Astrocyte of the cerebellum (primary cell): ENCODE measurements at regions of chr3 and their contacts with region 1.

Region 1: GRCh38 chr3:41199866-41200668 is 762 bp downstream of the CTNNB1 start:
- DNase-seq: no peak
- H3K4me3 ChIP-seq: peak overlapping the region; percentile 53
- CTCF ChIP-seq: no peak

Region 2: GRCh38 chr3:40847551-40847992 is 352.5 kb before region 1 on chr3:
- in situ Hi-C with region 1: loop called (anchors 5 kb)
- DNase-seq: peak; percentile 95
- H3K4me3 ChIP-seq: no peak overlapping the region
- CTCF ChIP-seq: peak; percentile 75

Region 3: DNA sequence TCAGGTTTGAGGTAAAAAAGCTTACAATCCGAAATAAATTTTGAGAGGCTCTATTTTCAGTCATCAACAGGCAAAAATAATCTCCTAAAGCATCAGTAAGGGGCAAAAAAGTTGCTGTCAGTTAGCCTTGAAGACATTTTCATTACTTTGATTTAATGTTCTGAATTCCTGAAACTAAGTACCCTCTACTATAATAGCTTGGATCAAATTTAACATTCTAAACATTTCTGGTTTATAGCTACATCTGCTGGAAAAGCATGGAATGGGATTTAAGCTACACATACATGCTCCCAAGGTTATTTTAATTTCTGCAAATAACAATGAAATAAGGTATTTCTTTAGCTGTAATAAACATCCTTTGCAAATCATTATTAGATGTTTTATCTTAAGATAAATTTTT is 516.4 kb after region 1 on chr3:
- in situ Hi-C with region 1: loop called (anchors 10 kb)
- DNase-seq: peak; percentile 44
- H3K4me3 ChIP-seq: no peak overlapping the region
- CTCF ChIP-seq: peak; percentile 52